H1 (cell line): ENCODE measurements at regions of chr4 and their contacts with region 1.

Region 1: GRCh38 chr4:2059034-2059725 is at the start of gene NAT8L:
- DNase-seq: no peak
- H3K4me3 ChIP-seq: peak within 1 kb of the TSS; percentile 32 to 65 (median 36)
- H3K27ac ChIP-seq: no peak within 1 kb of the TSS
- H3K4me1 ChIP-seq: peaks cover 0 to 5% (median 4%) of the 10 kb centered on the region in 4 experiments; a peak in 5 of 7 replicates
- H3K27me3 ChIP-seq: peaks cover 22 to 49% (median 38%) of the 10 kb centered on the region in 4 experiments
- CTCF ChIP-seq: no peak
- EP300 ChIP-seq: no peak
- POLR2A ChIP-seq: no peak
- RAD21 ChIP-seq: no peak
- total RNA-seq, gene NAT8L: 10.8 and 11.5 TPM in 2 replicates

Region 2: GRCh38 chr4:2045518-2045951 is 13.6 kb before region 1 on chr4:
- CTCF ChIA-PET with region 1: interaction called, 10 read pairs
- POLR2A ChIA-PET with region 1: interaction called, 5 read pairs
- DNase-seq: no peak
- H3K4me3 ChIP-seq: no peak overlapping the region
- H3K27ac ChIP-seq: no peak overlapping the region
- H3K4me1 ChIP-seq: peaks cover 0 to 5% (median 3%) of the 10 kb centered on the region in 4 experiments; a peak in 5 of 7 replicates
- H3K27me3 ChIP-seq: peaks cover 15 to 34% (median 30%) of the 10 kb centered on the region in 4 experiments
- CTCF ChIP-seq: no peak
- EP300 ChIP-seq: no peak
- POLR2A ChIP-seq: no peak
- RAD21 ChIP-seq: no peak